Dorsolateral prefrontal cortex (tissue), 120 donors: ENCODE measurements at regions of chr21 and their contacts with region 1.

Region 1: GRCh38 chr21:26850108-26850643 is 5.0 kb upstream of the ADAMTS1 start:
- DNase-seq: no peak
- H3K4me3 ChIP-seq: peak overlapping the region in 47 of 59 donors; percentile 2 to 53 (median 25)
- H3K27ac ChIP-seq: peak overlapping the region in 27 of 59 donors; percentile 9 to 100 (median 55)
- H3K27me3 ChIP-seq: no peaks in the 10 kb centered on the region
- CTCF ChIP-seq: peak; percentile 70 to 98 (median 85)

Region 2: DNA sequence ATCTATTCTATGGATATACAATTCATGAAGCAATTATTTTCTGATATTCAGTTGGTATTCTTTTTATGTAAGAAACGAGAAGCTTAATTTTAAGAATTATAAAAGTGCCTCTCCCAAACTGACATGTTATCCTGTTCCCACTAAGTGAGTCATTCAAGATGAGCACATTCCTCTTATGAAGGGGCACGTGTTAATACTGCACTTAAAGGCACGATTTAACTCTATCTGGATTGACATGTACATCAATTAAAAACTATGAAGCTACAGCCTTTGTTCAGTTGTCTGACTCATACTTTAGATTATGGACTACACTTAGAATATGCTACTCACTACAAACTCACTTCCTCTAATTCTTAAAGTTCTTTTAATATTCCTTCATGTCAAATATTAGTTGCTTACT is 388.7 kb before region 1 on chr21:
- intact Hi-C with region 1: no loop called
- DNase-seq: no peak
- H3K4me3 ChIP-seq: no peak overlapping the region
- H3K27ac ChIP-seq: no peak overlapping the region
- H3K27me3 ChIP-seq: no peaks in the 10 kb centered on the region
- CTCF ChIP-seq: no peak

Region 3: DNA sequence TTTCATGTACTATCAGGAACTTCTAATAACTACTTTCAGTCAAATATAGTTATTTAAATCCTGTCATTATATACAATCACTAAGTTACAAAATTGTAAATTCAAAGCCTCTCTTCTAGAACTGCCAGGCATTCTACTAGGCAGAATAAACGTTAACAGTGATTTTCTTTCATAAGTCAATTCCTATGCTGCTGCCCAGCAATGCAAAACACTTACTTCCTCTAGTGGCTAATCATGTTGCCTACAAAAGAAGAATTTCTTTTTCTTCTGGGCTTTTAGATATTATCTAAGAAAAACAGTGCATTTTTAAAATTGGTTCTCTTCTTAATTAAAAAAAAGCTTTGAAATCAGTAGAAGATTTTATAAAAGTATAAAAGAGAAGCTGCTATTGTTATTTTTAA is 626.5 kb after region 1 on chr21:
- intact Hi-C with region 1: loop called (anchors 10 kb)
- DNase-seq: no peak
- H3K4me3 ChIP-seq: no peak overlapping the region
- H3K27ac ChIP-seq: peak overlapping the region in 9 of 59 donors; percentile 20 to 85 (median 71)
- H3K27me3 ChIP-seq: peaks cover 0 to 9% (median 0%) of the 10 kb centered on the region in 45 donors
- CTCF ChIP-seq: peak in 53 of 56 donors; percentile 18 to 81 (median 57)

Region 4: GRCh38 chr21:27564684-27565301 is 714.6 kb after region 1 on chr21:
- intact Hi-C with region 1: loop called (anchors 5 kb)
- DNase-seq: peak in 7 of 10 donors; percentile 21 to 64 (median 49)
- H3K4me3 ChIP-seq: no peak overlapping the region
- H3K27ac ChIP-seq: no peak overlapping the region
- H3K27me3 ChIP-seq: no peaks in the 10 kb centered on the region
- CTCF ChIP-seq: peak; percentile 17 to 82 (median 68)

Region 5: DNA sequence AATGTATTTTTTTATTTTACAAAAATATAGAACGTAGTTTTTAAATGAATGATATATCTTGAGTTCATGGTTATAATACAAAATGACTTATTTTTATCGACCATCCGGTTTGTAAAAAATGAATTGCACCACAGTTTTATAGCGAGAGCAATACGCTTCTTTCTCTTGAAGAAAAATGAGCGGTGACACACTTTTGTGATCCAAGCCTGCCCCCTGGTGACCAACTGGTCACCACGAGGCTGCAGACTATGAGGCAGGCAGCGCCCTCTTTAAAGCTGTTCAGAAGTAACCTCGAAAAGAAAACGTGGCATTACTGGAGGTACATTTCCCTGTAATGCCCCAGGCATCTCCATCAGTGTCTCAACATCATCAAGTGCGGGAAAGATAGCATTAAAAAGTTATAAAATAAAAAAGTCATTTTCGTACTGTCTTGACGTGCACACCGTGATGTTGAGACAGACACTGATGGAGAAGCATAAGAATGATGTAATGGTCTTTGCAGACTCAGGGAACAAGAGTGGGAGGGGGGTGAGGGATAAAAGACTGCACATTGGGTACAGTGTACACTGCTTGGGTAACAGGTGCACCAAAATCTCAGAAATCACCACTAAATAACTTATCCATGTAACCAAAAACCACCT is 850.9 kb after region 1 on chr21:
- intact Hi-C with region 1: loop called (anchors 1 to 2 kb)
- DNase-seq: peak; percentile 71 to 90 (median 85)
- H3K4me3 ChIP-seq: peak overlapping the region in 43 of 59 donors; percentile 8 to 57 (median 31)
- H3K27ac ChIP-seq: peak overlapping the region in 9 of 59 donors; percentile 9 to 71 (median 39)
- H3K27me3 ChIP-seq: peaks cover 0 to 5% (median 0%) of the 10 kb centered on the region in 45 donors
- CTCF ChIP-seq: peak; percentile 73 to 100 (median 97)

Region 6: DNA sequence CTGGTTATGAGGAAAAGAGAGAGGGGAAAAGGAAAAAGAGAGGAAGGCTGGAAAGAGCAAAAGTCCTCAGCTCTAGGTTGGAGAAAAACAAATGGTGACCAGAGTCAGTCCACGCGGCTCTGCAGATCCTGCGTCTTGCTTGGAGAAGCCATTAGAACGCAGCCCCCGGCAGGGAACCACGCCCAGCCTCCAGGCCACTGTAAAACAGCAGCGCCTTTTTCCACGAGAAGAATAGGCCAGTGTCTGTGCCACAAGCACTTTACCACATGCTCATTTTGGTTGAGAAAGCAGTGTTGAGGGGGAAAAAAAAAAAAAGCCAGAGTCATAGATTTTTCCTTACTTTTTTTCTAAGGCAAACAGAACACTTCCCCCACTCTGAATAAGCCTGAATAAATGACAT is 963.6 kb after region 1 on chr21:
- intact Hi-C with region 1: loop called (anchors 5 to 10 kb)
- DNase-seq: peak; percentile 4 to 93 (median 86)
- H3K4me3 ChIP-seq: peak overlapping the region in 13 of 59 donors; percentile 4 to 43 (median 21)
- H3K27ac ChIP-seq: peak overlapping the region; percentile 23 to 97 (median 88)
- H3K27me3 ChIP-seq: no peaks in the 10 kb centered on the region
- CTCF ChIP-seq: peak in 11 of 56 donors; percentile 7 to 46 (median 25)

Region 7: DNA sequence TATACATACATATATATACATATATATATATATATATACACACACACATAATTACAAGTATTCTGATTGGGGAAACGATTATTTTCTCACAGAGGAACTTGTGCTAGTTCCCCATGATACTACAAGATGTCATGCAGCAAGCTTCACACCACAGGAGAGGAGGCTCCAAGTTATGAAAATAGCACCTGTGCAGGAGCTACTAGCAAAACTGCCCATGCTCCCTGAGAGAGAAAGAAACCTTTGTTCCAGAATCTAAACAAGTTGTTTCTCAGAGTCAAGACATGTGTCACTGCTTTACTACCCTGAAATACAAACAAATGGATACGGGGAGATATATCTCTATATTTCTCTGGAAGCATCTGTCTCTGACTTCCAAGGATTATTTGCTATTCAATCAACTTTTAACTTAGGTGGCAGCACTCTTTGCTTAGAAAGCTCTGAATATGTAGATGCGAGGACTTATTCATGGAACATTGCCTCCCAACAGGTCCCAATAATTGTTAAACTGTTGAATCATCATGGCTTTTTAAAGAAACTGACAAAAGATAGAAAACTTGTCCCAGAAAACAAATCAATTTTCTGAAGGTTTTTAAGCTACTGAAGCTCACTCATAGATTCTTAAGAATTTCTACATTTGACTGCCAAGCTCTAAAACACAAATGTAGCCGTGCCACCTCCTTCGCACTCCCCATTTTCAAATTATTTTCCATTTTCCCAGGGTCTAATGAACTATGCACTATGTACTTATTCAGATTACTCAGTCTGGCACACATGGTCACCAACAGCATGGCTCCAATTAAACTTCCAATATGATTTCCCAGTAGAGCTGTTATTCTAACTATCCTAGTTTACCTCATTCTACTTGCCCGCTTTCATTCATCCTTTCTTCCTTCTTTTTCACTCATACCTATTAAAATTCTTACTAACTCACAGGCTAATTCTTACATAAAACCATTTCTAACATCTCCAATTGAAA is 1213.4 kb after region 1 on chr21:
- intact Hi-C with region 1: loop called in 1 of 2 experiments (anchors 5 kb)
- DNase-seq: no peak
- H3K4me3 ChIP-seq: no peak overlapping the region
- H3K27ac ChIP-seq: no peak overlapping the region
- H3K27me3 ChIP-seq: no peaks in the 10 kb centered on the region
- CTCF ChIP-seq: no peak